ENCODE measurements at regions of chr10 and their contacts with region 1.

Region 1: DNA sequence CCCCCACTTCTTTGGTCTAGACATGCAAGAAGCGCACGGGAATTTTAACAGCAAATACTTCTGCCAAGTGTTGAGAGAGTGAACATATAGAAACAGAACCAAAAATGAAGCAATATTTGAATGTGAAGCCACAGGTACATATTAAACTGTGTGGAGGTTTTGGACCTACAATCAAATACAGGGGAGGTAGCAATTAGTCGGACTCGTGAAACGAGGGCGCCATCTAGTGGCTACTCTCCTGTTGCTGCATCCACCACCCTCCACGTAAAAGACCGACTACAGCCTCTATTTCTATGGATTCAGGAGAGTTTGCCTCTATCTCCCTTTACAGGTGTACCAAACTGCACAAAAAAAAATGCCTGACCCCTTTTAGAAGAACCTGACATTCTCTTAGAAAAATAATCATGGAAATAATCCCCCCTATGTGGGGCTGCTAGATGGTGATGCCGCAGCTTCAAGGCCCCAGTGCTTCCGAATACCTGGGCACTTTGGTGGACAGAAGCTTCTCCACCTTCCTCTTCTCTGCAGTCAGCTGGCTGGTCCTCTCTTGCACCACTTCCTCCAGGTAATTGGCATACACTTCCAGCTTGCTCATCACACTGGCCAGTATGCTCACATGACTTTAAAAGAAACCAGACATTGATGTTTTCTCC is 31.7 kb downstream of the TECTB start:
- DNase-seq: peak; percentile 93

Region 2: DNA sequence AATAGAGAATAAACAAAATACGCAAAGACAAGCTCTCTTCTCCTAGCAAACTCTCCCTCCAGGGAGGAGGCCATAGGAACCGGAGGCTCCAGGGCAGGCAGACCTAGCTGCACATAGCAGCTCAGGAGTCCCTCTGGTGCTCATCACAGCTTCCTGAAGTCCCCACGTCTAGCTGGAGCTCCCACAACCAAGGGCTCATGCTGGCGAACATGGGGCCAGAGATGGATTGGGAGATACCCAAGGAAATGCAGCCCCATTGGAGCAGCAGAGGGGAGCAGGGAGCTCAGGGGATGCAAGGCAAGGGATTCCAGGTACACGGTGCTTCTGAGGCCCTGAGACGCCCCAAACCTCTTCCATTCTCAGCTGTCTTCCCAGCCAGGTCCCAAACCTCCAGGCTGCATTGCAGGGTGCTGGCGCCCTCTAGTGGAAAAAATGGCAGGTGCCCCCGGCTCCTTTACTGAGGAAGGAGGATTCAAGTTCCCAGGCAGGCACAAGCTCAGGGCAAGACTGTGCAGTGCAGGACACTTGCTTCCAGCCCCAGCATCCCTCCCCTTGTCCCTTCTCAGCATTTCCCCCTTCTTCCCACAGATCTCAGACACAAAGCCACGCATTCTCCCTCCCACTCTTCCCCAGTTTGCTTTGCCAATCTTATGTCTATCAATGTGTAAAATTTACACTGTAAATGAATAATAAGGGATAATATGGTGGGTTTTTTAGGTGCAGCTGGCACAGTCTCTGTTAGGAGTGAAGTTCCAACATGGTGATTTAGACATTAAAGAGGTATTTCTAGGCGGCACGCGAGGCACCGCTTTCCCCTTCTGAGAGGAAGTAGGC is 177.6 kb before region 1 on chr10:
- intact Hi-C with region 1: loop called in 1 of 2 experiments (anchors 5 kb)
- DNase-seq: peak; percentile 88

Region 3: DNA sequence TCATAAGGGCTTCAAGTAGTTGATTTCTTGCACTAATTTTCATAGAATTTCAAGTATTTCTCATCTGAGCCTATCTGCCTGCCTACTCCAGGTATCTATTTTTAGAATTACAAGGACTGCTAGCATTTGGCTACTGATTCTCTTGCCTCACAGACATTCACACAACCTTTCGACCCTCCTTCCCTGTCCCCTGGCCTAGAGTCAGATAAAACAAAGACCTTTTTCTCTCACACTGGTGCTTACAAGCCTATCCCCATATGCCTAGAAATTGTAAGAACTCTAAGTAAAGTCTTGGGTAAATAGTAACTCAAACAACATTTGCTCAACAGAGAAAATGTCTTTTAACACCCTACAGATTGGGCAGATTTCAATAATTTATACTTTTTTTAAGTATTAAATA is 137.7 kb before region 1 on chr10:
- intact Hi-C with region 1: loop called (anchors 10 kb)
- DNase-seq: no peak

Region 4: DNA sequence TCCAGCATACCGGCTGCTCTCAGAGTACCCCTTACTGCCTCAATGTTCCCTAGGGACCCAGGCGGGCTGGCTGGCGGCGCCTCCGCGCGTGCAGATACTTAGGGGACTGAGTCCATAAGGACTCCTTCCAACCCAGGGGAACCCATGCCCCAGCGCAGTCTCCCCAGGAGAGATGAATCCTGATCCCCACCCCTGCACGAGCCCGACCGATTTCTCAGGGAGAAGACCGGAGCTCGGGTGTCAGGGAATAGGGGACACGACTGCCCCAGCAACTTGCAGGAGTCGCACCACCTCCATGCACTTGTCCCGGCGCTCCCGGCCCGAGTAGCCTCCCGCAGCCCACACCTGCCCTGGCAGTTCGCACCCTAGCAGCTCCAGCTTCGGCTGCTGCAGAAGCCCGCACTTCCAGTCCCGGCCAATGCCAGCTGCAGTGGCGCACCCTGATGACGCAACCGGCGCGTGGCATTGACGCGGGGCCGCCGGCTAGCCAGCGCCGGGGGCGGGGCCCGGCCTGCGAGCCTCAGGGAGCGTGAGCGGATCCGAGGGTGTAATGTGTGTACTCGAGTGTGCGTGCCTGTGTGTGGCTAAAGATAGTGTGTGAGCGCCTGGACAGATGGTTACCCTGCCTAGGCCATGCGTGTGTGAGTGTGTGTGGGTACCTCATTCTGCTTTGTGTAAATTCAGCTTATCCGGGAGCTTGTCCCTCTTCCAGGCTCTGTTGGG is 131.5 kb before region 1 on chr10 and contains the start of gene GPAM:
- intact Hi-C with region 1: loop called (anchors 10 kb)
- DNase-seq: peak; percentile 99
- total RNA-seq, gene GPAM: 11.8 to 13.8 TPM

Region 5: DNA sequence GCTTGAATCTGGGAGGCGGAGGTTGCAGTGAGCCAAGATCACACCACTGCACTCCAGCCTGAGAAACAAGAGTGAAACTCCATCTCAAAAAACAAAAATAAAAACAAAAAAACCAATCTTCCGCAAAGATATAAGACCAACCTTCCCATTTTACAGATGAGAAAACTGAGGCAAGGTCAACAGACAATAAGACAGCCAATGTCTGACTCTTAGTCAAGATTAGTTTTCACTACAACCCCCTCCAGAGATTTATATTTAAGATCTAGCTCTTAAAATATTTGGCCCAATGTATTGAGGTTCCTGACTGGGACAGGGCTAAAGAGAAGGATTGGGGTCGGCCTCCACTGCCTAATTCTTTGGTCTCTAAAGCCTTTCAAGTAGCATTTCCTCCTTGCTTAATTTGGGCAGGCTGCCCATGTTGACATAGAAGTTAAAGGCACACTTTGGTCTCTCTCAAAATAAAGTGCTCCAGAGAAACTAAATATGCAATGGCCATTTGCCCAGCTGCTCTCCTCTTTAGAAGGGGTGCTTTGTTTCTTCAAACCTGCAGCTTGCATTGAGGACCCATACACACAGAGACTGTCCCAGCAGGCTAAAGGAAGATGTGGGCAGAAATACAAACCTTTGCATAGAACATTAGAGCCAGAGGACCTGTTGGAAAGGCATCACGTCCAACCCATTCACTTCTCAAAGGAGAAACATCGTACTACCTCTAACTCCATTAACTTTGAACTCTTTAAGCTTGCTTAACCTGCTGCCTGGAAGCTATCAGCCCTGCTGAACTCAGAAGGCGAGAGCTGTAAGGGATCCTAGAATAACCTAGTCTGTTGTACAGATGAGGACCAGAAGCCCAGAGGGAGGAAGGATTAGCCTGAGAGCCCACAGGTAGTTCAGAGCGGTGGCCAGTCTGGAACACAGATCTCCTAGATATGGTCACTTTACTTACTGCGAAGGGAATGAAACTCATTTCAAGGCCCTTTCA is 27.8 kb before region 1 on chr10:
- intact Hi-C with region 1: no loop called
- DNase-seq: no peak

Region 6: GRCh38 chr10:112344261-112344660 is 29.3 kb after region 1 on chr10:
- intact Hi-C with region 1: no loop called
- DNase-seq: no peak

Measured in posterior vena cava (tissue), 2 donors.